SK-N-SH (cell line): ENCODE measurements at regions of chr6 and their contacts with region 1.

Region 1: GRCh38 chr6:20069021-20069522 is 143.2 kb downstream of the MBOAT1 start:
- DNase-seq: peak; percentile 25
- H3K4me3 ChIP-seq: no peak overlapping the region; a peak in 1 of 4 replicates
- H3K27ac ChIP-seq: no peak overlapping the region
- H3K4me1 ChIP-seq: peaks cover 0 to 5% of the 10 kb centered on the region in 2 experiments; a peak in 1 of 4 replicates
- H3K27me3 ChIP-seq: no peaks in the 10 kb centered on the region
- CTCF ChIP-seq: no peak
- EP300 ChIP-seq: no peak
- RAD21 ChIP-seq: no peak

Region 2: GRCh38 chr6:20056350-20056992 is 12.6 kb before region 1 on chr6:
- CTCF ChIA-PET with region 1: interaction called, 11 read pairs
- POLR2A ChIA-PET with region 1: no interaction called
- DNase-seq: peak; percentile 39
- H3K4me3 ChIP-seq: no peak overlapping the region; a peak in 1 of 4 replicates
- H3K27ac ChIP-seq: no peak overlapping the region
- H3K4me1 ChIP-seq: no peaks in the 10 kb centered on the region
- H3K27me3 ChIP-seq: no peaks in the 10 kb centered on the region
- CTCF ChIP-seq: peak; percentile 76
- EP300 ChIP-seq: no peak
- RAD21 ChIP-seq: peak; percentile 81

Region 3: GRCh38 chr6:20169119-20169557 is 100.1 kb after region 1 on chr6:
- CTCF ChIA-PET with region 1: no interaction called
- POLR2A ChIA-PET with region 1: no interaction called
- DNase-seq: no peak
- H3K4me3 ChIP-seq: no peak overlapping the region
- H3K27ac ChIP-seq: no peak overlapping the region
- H3K4me1 ChIP-seq: no peaks in the 10 kb centered on the region
- H3K27me3 ChIP-seq: no peaks in the 10 kb centered on the region
- CTCF ChIP-seq: no peak
- EP300 ChIP-seq: no peak
- RAD21 ChIP-seq: no peak